Head of caudate nucleus (tissue), 42 donors: ENCODE measurements at regions of chr3 and their contacts with region 1.

Region 1: GRCh38 chr3:145604851-145605250 is 556.1 kb downstream of the PLOD2 start:
- DNase-seq: no peak

Region 2: GRCh38 chr3:145578461-145578860 is 26.4 kb before region 1 on chr3:
- intact Hi-C with region 1: loop called (anchors 2 kb)
- DNase-seq: no peak